ENCODE measurements at regions of chr9 and their contacts with region 1.

Region 1: GRCh38 chr9:85741875-85742629 is at the start of gene AGTPBP1:
- DNase-seq: peak; percentile 94
- H3K4me3 Mint-ChIP-seq: peak within 1 kb of the TSS; percentile 98
- H3K27ac Mint-ChIP-seq: peak within 1 kb of the TSS; percentile 95
- H3K4me1 Mint-ChIP-seq: peaks cover 37% of the 10 kb centered on the region
- H3K27me3 Mint-ChIP-seq: peaks cover 7% of the 10 kb centered on the region
- total RNA-seq, gene AGTPBP1: 23.5 and 26.2 TPM in 2 replicates

Region 2: DNA sequence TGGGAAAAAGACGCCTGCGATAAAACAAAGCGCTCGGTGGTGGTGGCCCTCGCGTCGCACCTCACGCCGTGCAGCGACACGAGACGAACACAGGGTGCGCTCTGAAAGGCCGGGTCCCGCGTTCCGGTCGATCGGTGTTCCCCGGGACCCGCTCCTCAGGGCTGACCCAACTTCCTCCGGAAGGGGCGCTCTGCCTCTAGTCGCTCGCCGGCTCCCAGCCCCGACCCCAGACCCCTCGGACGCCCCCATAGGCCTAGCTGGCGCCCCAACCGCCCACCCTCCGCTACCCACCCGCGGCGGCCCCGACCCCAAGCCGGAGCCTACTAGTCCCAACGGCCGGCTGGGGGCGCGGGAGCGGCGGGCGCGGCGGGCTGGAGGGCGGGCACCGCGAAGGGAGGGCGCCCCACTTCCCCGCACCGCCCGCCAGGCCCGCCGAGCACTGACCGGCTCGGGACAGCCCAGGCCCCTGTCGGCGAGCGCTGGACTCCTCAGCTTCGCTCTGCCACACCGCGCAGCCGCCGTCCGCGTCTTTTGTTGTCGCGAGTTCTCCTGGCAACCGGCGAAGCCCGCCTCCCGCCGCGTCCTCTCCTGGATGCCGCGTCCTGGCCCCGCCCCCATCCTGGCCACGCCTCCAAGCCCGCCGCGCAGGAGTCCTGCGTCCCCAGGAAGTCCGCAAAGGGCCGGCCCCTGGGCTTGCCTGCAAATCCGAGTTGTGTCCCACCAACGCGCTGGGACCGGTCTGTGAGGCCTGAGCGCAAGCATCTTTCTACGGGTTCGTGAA is 1820.9 kb before region 1 on chr9 and contains the start of gene KIF27:
- intact Hi-C with region 1: loop called (anchors 1 kb)
- DNase-seq: peak; percentile 98
- H3K4me3 Mint-ChIP-seq: peak within 1 kb of the TSS; percentile 85
- H3K27ac Mint-ChIP-seq: peak within 1 kb of the TSS; percentile 91
- H3K4me1 Mint-ChIP-seq: peaks cover 17% of the 10 kb centered on the region
- H3K27me3 Mint-ChIP-seq: no peaks in the 10 kb centered on the region
- total RNA-seq, gene KIF27: 2.9 TPM in 2 replicates

Region 3: DNA sequence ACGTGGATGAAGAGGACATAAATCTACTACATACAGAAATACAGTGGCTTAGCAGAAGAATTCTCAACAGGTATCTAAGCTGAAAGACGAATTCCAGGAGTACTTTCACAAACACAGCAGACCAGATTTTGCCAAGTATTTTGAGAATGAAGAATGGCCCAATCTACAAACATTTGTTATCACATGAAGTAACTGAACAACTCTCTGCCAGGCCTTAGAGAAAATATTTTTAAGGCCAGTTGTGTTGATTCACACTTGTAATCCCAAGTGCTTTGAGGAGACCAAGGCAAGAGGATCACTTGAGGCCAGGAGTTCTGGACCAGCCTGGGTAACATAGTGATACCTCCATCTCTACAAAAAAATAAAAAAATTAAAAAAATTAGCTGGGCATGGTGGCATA is 14.6 kb before region 1 on chr9:
- intact Hi-C with region 1: loop called (anchors 2 kb)
- DNase-seq: no peak
- H3K4me3 Mint-ChIP-seq: no peak overlapping the region
- H3K27ac Mint-ChIP-seq: no peak overlapping the region
- H3K4me1 Mint-ChIP-seq: peaks cover 58% of the 10 kb centered on the region
- H3K27me3 Mint-ChIP-seq: no peaks in the 10 kb centered on the region

Region 4: GRCh38 chr9:86098824-86099700 is 357.0 kb after region 1 on chr9 and contains the start of gene GOLM1:
- intact Hi-C with region 1: loop called (anchors 2 kb)
- DNase-seq: peak; percentile 30
- H3K4me3 Mint-ChIP-seq: peak within 1 kb of the TSS; percentile 95
- H3K27ac Mint-ChIP-seq: peak within 1 kb of the TSS; percentile 89
- H3K4me1 Mint-ChIP-seq: peaks cover 19% of the 10 kb centered on the region
- H3K27me3 Mint-ChIP-seq: peaks cover 48% of the 10 kb centered on the region
- total RNA-seq, gene GOLM1: 8.1 and 10.1 TPM in 2 replicates

Region 5: GRCh38 chr9:86126998-86127972 is 385.2 kb after region 1 on chr9:
- intact Hi-C with region 1: no loop called
- DNase-seq: no peak
- H3K4me3 Mint-ChIP-seq: no peak overlapping the region
- H3K27ac Mint-ChIP-seq: no peak overlapping the region
- H3K4me1 Mint-ChIP-seq: no peaks in the 10 kb centered on the region
- H3K27me3 Mint-ChIP-seq: no peaks in the 10 kb centered on the region

Region 6: GRCh38 chr9:86948074-86948929 is 1206.2 kb after region 1 on chr9:
- intact Hi-C with region 1: loop called (anchors 5 kb)
- DNase-seq: peak; percentile 54
- H3K4me3 Mint-ChIP-seq: peak overlapping the region; percentile 84
- H3K27ac Mint-ChIP-seq: no peak overlapping the region
- H3K4me1 Mint-ChIP-seq: peaks cover 10% of the 10 kb centered on the region
- H3K27me3 Mint-ChIP-seq: peaks cover 21% of the 10 kb centered on the region